ENCODE measurements at regions of chr4 and their contacts with region 1.

Region 1: GRCh38 chr4:102139132-102139573 is 206.1 kb downstream of the SLC39A8 start:
- DNase-seq: peak; percentile 98
- H3K4me3 ChIP-seq: peak overlapping the region in 1 of 3 experiments; percentile 8
- H3K27ac ChIP-seq: peak overlapping the region; percentile 99
- H3K4me1 ChIP-seq: peaks cover 40% of the 10 kb centered on the region
- H3K27me3 ChIP-seq: no peaks in the 10 kb centered on the region
- CTCF ChIP-seq: no peak
- POLR2A ChIP-seq: peak; percentile 52

Region 2: GRCh38 chr4:101037938-101038413 is 1101.2 kb before region 1 on chr4:
- CTCF ChIA-PET with region 1: no interaction called
- POLR2A ChIA-PET with region 1: no interaction called
- dilution Hi-C with region 1: no loop called
- intact Hi-C with region 1: loop called (anchors 5 kb)
- DNase-seq: peak; percentile 78
- H3K4me3 ChIP-seq: no peak overlapping the region
- H3K27ac ChIP-seq: peak overlapping the region; percentile 83
- H3K4me1 ChIP-seq: peaks cover 18% of the 10 kb centered on the region
- H3K27me3 ChIP-seq: no peaks in the 10 kb centered on the region
- CTCF ChIP-seq: no peak
- POLR2A ChIP-seq: no peak

Region 3: DNA sequence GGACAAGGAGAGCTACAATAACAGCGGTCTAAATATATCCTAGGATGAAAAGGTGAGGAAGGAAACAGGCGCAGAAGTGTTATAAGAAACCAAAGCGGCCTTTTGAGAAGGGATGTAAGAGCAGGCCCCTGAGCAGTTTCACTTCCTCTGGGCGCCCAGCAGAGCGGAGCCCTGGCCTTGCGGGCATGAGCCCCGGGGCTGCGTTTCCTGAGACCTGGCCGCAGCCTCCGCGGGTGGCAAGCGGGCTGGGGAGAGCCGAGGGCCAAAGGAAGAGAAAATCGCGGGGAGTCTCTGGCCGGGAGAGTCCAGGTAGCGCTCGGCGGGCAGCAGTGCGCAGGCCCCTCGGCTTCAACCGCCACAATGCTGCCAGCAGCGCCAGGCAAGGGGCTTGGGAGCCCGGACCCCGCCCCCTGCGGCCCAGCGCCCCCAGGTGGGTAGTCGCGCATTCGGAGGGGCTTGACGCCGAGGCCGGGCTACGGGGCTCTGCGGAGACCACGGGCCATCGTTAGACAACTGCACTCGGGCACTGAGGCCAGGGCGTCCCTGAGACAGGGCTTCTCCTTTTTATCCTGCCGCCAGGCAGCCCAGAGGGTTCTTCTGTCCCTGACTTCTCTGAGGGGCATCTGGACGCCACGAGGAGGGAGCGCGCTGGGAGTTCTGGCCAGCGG is 348.5 kb before region 1 on chr4 and contains the start of gene BANK1:
- CTCF ChIA-PET with region 1: no interaction called
- POLR2A ChIA-PET with region 1: no interaction called
- dilution Hi-C with region 1: no loop called
- intact Hi-C with region 1: loop called (anchors 5 kb)
- DNase-seq: peak; percentile 62
- H3K4me3 ChIP-seq: peak within 1 kb of the TSS; percentile 30 to 65 (median 32)
- H3K27ac ChIP-seq: no peak within 1 kb of the TSS
- H3K4me1 ChIP-seq: peaks cover 4% of the 10 kb centered on the region
- H3K27me3 ChIP-seq: no peaks in the 10 kb centered on the region
- CTCF ChIP-seq: peak; percentile 25 to 67
- POLR2A ChIP-seq: no peak
- total RNA-seq, gene BANK1: 0.29 and 0.60 TPM in 2 replicates

Region 4: DNA sequence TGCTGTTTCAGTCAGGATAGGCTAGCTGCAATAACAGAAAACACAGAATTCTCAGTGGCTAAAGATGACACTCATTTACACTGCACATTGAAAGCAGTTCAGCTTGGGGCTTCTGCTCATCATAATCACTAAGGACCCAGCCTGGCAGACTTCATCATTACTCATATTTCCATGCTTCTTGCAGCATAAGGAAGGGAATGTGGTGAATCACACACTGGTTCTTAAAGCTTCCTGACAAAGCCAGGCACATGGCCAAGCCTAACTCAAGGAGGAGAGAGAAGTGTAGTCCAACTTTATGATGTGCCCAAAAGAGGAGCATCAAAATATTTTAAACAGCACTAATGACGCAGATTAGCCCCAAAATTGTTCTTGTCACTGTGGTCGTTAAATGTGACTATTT is 162.1 kb before region 1 on chr4:
- CTCF ChIA-PET with region 1: no interaction called
- POLR2A ChIA-PET with region 1: no interaction called
- dilution Hi-C with region 1: no loop called
- intact Hi-C with region 1: loop called (anchors 2 kb)
- DNase-seq: peak; percentile 91
- H3K4me3 ChIP-seq: no peak overlapping the region
- H3K27ac ChIP-seq: peak overlapping the region; percentile 5
- H3K4me1 ChIP-seq: peaks cover 14% of the 10 kb centered on the region
- H3K27me3 ChIP-seq: no peaks in the 10 kb centered on the region
- CTCF ChIP-seq: no peak
- POLR2A ChIP-seq: no peak

Region 5: DNA sequence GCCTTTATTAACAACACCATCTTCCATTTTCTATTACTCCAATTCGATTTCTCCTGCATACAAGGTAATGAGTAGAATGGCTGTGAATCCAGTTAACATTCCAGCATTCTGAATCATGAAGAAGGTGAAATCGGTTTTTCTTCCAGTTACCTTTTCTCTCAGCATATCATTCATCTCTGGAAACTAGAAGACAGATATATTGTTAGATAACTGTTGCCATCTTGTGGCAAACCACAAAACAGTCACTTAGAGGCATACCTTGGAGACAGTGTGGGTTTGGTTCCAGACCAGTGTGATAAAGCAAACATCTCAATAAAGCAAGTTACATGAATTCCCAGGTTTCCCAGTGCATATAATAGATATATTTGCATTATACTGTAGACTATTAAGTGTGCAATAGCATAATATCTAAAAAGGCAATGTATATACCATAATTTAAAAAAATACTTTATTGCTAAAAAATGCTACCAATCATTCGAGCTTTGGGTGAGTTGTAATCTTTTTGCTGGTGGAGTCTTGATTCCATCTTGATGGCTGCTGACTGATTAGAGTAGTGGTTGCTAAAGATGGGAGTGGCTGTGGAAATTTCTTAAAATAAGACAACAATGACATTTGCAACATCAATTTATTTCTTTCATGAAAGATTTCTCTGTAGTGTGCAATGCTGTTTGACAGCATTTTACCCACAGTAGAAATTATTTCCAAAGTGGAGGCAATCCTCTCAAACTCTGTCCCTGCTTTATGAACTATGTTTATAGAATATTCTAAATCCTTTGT is 124.0 kb after region 1 on chr4:
- CTCF ChIA-PET with region 1: no interaction called
- POLR2A ChIA-PET with region 1: no interaction called
- dilution Hi-C with region 1: no loop called
- intact Hi-C with region 1: loop called (anchors 1 kb)
- DNase-seq: peak; percentile 64
- H3K4me3 ChIP-seq: no peak overlapping the region
- H3K27ac ChIP-seq: no peak overlapping the region
- H3K4me1 ChIP-seq: peaks cover 4% of the 10 kb centered on the region
- H3K27me3 ChIP-seq: no peaks in the 10 kb centered on the region
- CTCF ChIP-seq: peak; percentile 42 to 52
- POLR2A ChIP-seq: no peak